ENCODE measurements at regions of chr7 and their contacts with region 1.

Region 1: GRCh38 chr7:143214789-143215679 is 6.8 kb upstream of the TAS2R40 start:
- DNase-seq: peak in 1 of 2 donors; percentile 60
- ATAC-seq: peak; percentile 92
- H3K4me3 ChIP-seq: no peak overlapping the region
- H3K27ac ChIP-seq: no peak overlapping the region
- H3K4me1 ChIP-seq: no peaks in the 10 kb centered on the region
- H3K27me3 ChIP-seq: no peaks in the 10 kb centered on the region

Region 2: DNA sequence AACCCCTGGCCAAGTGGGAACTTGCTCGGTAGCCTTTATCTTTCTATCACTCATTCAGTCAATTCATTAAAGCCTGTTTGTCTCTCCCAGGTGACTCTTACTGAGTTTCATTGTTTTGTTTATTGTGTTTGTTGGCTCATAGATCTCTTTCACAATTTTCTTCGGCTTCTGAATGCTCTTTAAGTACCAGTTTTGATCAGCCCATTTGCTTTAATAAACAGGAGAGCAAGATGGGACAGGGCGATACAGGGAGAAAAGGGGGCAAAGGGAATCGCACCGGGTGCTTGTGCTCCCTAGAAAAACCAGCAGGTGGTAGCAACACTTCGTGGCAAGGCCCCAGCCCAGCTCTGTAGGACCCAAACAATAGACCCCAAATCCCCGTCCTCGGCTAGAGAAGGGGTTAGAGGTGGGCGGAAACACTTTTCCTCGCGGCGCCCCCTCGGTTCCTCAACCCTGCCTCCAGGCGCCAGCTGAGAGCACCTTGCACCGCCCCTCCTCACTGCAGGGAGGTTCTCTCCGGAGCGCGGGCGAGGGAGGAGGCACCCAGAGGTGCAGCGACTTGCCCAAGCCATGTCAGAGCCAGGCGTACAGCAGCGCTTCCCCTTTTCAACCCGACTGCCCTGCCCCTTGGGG is 361.2 kb before region 1 on chr7:
- intact Hi-C with region 1: loop called (anchors 10 kb)
- DNase-seq: peak in 1 of 2 donors; percentile 81
- ATAC-seq: peak; percentile 83
- H3K4me3 ChIP-seq: peak overlapping the region; percentile 46 to 87
- H3K27ac ChIP-seq: no peak overlapping the region
- H3K4me1 ChIP-seq: no peaks in the 10 kb centered on the region
- H3K27me3 ChIP-seq: no peaks in the 10 kb centered on the region

Region 3: DNA sequence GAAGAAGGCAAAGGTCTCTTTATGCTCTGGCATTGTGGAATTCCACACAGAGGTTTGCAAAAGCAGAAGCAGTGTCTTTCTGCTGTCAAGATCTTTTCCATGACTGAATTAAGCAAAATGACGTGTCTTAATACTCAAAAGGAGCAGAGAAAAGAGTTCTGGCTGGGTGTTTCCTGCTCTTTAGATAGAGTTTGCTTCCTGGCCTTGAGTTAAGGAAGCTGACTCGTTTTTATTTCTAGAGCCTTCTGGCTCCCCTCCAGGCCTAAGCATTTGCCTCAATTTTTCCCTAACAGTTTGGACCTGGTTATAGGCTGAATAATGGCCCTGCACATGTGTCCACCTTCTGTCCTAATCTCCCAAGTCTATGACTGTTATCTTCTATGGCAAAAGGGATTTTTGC is 284.2 kb after region 1 on chr7:
- intact Hi-C with region 1: no loop called
- DNase-seq: peak in 1 of 2 donors; percentile 47
- ATAC-seq: peak; percentile 71
- H3K4me3 ChIP-seq: no peak overlapping the region
- H3K27ac ChIP-seq: no peak overlapping the region
- H3K4me1 ChIP-seq: no peaks in the 10 kb centered on the region
- H3K27me3 ChIP-seq: no peaks in the 10 kb centered on the region

Measured in aorta (tissue), 5 donors.